Activated B cell treated with CpG ODN at 0.5 μM for 24 hours (primary cell): ENCODE measurements at regions of chr4 and their contacts with region 1.

Region 1: GRCh38 chr4:75107755-75108612 is 175.1 kb downstream of the PARM1 start:
- DNase-seq: no peak
- ATAC-seq: no peak
- H3K4me3 Mint-ChIP-seq: no peak overlapping the region
- H3K27ac Mint-ChIP-seq: no peak overlapping the region
- H3K4me1 Mint-ChIP-seq: peaks cover 36% of the 10 kb centered on the region
- H3K27me3 Mint-ChIP-seq: no peaks in the 10 kb centered on the region
- CTCF ChIP-seq: no peak

Region 2: DNA sequence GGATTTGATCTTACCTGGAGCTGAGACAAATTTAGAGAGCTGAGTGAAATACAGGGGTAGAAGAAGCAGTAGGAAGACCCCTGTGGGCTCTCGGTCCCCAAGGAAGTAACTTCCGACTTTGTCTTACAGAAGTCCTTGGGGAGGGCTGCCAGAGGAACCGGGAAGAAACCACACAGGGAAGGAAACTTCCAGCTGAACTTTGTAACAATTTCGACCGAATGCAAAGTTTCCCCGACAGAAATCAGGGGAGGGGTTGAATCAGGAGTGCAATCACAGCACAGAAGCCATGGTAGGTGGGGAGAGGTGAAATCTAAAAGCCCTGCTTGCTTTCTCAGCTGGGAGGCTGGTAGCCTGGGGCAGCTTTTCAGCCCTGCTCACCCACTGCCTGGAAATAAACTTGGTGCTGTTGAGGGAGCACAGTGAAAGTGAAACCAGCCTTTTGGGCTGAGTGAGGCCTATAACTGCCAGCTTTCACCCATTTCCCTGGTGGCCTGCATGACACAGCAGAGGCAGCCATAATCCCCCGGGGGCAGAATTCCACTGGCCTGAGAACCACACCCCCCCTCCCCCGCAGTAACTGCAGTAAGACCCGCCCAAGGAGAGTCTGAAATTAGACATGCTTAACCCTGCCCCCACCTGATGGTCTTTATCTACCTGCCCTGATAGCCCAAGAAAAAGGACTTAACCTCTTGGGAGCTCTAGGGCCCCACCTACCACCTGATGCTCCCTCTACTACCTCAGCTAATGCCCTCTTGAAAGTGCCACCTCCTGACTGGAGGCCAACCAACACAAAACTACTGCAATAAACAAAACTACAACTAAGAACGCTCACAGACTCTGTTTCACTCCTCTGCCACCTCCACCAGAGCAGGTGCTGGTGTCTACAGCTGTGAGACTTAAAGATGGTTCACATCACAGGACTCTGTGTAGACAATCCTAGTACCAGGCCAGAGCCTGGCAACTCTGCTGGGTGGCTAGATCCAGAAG is 73.1 kb after region 1 on chr4:
- CTCF ChIA-PET with region 1: no interaction called
- POLR2A ChIA-PET with region 1: no interaction called
- intact Hi-C with region 1: loop called (anchors 5 kb)
- DNase-seq: no peak
- ATAC-seq: peak; percentile 89
- H3K4me3 Mint-ChIP-seq: peak overlapping the region; percentile 24
- H3K27ac Mint-ChIP-seq: peak overlapping the region; percentile 66
- H3K4me1 Mint-ChIP-seq: peaks cover 20% of the 10 kb centered on the region
- H3K27me3 Mint-ChIP-seq: peaks cover 3% of the 10 kb centered on the region
- CTCF ChIP-seq: no peak

Region 3: DNA sequence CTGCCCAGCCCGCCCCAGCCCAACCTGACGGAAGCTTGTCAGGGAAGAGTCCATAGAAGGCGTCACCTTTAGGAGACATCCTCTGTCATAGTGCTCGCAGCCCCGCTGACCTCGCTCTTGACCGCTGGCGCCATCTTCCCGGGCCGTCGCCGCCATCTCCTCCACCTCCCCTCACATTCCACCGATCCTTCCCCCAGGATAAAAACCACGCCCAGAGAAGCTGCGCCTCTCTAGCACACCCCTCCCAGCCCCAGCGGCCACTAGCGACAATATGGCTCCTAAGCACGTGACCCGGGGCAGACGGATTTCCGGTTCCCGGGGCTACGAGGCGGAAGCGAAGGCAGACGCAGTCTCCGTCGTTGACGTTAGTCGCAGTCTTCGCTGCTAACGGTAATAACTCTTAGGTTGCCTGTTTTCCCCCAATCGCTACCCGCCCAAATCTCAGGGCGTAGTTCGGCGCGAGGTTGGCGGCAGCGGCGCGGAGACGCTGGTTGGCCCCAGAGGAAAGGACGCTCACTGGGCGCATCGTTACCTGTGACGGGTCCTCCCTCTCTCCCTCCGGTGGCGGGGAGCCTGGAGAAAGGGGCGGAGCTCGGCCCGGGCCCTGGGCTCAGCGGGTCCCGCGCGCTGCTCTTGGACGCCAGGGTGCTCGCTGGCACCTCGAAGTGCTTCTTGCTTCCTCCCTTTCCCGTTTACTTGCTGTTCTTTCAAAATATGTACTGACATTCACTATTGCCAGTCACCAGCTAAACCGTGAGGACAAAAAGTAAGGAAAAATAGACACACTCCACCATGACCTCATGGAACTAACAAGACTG is 406.4 kb after region 1 on chr4 and contains the starts of genes RCHY1 and THAP6:
- CTCF ChIA-PET with region 1: no interaction called
- POLR2A ChIA-PET with region 1: no interaction called
- intact Hi-C with region 1: loop called (anchors 10 kb)
- DNase-seq: peak; percentile 88
- ATAC-seq: peak; percentile 87
- H3K4me3 Mint-ChIP-seq: no peak within 1 kb of the TSS
- H3K27ac Mint-ChIP-seq: peak within 1 kb of the TSS; percentile 95
- H3K4me1 Mint-ChIP-seq: peaks cover 39% of the 10 kb centered on the region
- H3K27me3 Mint-ChIP-seq: no peaks in the 10 kb centered on the region
- CTCF ChIP-seq: no peak
- total RNA-seq, gene RCHY1: 28.5 and 29.6 TPM in 2 replicates
- total RNA-seq, gene THAP6: 17.4 and 24.6 TPM in 2 replicates